Body of pancreas (tissue), 4 donors: ENCODE measurements at regions of chr12 and their contacts with region 1.

Region 1: DNA sequence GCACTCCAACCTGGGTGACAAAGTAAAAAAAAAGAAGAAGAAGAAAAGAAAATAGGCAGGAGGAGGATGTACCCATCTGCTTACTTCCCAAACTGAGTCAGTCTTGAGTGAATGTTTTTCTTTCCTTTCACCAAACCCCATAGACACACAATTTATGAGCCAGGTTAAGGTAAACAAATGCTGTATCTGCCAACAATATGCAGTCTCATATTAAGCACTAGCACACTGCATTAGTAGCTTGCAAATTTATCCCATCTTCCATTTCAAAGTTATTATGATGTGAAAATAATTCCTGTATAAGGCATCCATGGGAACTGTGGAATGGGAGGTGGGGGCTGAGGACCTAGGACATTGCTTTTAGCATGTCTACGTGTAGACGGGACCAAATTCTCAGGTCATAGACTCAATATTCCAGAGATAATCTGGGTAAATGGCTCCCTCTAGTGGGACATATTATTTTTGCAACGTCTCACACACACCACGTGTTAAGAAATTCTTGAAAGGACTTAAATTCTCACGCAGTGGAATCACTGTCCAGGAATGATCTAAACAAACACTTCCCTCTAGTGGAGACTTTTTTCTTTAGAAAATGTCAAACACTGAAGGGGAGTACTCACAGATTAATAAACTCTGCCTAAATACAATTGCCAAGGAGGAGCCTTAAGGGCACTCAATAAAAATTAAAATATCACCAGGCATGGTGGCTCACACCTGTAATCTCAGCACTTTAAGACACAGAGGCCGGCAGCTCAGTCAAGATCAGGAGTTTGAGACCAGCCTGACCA is 17.1 kb upstream of the OR10P1 start:
- DNase-seq: peak; percentile 41 to 78 (median 48)
- ATAC-seq: peak; percentile 89
- H3K4me3 ChIP-seq: no peak overlapping the region
- H3K27ac ChIP-seq: no peak overlapping the region
- H3K4me1 ChIP-seq: peaks cover 4% of the 10 kb centered on the region
- H3K27me3 ChIP-seq: no peaks in the 10 kb centered on the region
- CTCF ChIP-seq: peak; percentile 56 to 93 (median 88)
- POLR2A ChIP-seq: no peak

Region 2: GRCh38 chr12:55194382-55194781 is 425.2 kb before region 1 on chr12:
- intact Hi-C with region 1: loop called (anchors 5 kb)
- DNase-seq: no peak
- ATAC-seq: no peak
- H3K4me3 ChIP-seq: no peak overlapping the region
- H3K27ac ChIP-seq: no peak overlapping the region
- H3K4me1 ChIP-seq: no peaks in the 10 kb centered on the region
- H3K27me3 ChIP-seq: no peaks in the 10 kb centered on the region
- CTCF ChIP-seq: no peak
- POLR2A ChIP-seq: no peak

Region 3: GRCh38 chr12:55495490-55495889 is 124.1 kb before region 1 on chr12:
- intact Hi-C with region 1: no loop called
- DNase-seq: peak in 1 of 4 donors; percentile 7
- ATAC-seq: peak; percentile 63
- H3K4me3 ChIP-seq: no peak overlapping the region
- H3K27ac ChIP-seq: no peak overlapping the region
- H3K4me1 ChIP-seq: peaks cover 13% of the 10 kb centered on the region
- H3K27me3 ChIP-seq: no peaks in the 10 kb centered on the region
- CTCF ChIP-seq: no peak
- POLR2A ChIP-seq: no peak

Region 4: GRCh38 chr12:55760663-55761062 is 141.1 kb after region 1 on chr12:
- intact Hi-C with region 1: no loop called
- DNase-seq: no peak
- ATAC-seq: no peak
- H3K4me3 ChIP-seq: no peak overlapping the region
- H3K27ac ChIP-seq: no peak overlapping the region
- H3K4me1 ChIP-seq: no peaks in the 10 kb centered on the region
- H3K27me3 ChIP-seq: no peaks in the 10 kb centered on the region
- CTCF ChIP-seq: no peak
- POLR2A ChIP-seq: no peak